PC-3 (cell line): ENCODE measurements at regions of chr2 and their contacts with region 1.

Region 1: GRCh38 chr2:81007104-81007503 is 702.6 kb upstream of the LRRTM1 start:
- DNase-seq: peak; percentile 60
- ATAC-seq: peak; percentile 37; the same call in 1 of the 2 replicates
- H3K4me3 ChIP-seq: no peak overlapping the region
- H3K27ac ChIP-seq: no peak overlapping the region
- H3K4me1 ChIP-seq: 0 out of 2 replicates have a peak, but pooled peaks cover 3% of the 10 kb centered on the region
- H3K27me3 ChIP-seq: no peaks in the 10 kb centered on the region
- CTCF ChIP-seq: peak; percentile 57

Region 2: GRCh38 chr2:80968450-80968849 is 38.7 kb before region 1 on chr2:
- CTCF ChIA-PET with region 1: no interaction called
- POLR2A ChIA-PET with region 1: no interaction called
- intact Hi-C with region 1: no loop called
- DNase-seq: peak; percentile 3
- ATAC-seq: no peak
- H3K4me3 ChIP-seq: no peak overlapping the region
- H3K27ac ChIP-seq: no peak overlapping the region
- H3K4me1 ChIP-seq: no peaks in the 10 kb centered on the region
- H3K27me3 ChIP-seq: no peaks in the 10 kb centered on the region
- CTCF ChIP-seq: peak; percentile 36; the same call in 1 of the 2 replicates

Region 3: GRCh38 chr2:81050580-81051095 is 43.5 kb after region 1 on chr2:
- CTCF ChIA-PET with region 1: no interaction called
- POLR2A ChIA-PET with region 1: no interaction called
- intact Hi-C with region 1: no loop called
- DNase-seq: no peak
- ATAC-seq: no peak
- H3K4me3 ChIP-seq: no peak overlapping the region
- H3K27ac ChIP-seq: no peak overlapping the region
- H3K4me1 ChIP-seq: no peaks in the 10 kb centered on the region
- H3K27me3 ChIP-seq: no peaks in the 10 kb centered on the region
- CTCF ChIP-seq: no peak

Region 4: DNA sequence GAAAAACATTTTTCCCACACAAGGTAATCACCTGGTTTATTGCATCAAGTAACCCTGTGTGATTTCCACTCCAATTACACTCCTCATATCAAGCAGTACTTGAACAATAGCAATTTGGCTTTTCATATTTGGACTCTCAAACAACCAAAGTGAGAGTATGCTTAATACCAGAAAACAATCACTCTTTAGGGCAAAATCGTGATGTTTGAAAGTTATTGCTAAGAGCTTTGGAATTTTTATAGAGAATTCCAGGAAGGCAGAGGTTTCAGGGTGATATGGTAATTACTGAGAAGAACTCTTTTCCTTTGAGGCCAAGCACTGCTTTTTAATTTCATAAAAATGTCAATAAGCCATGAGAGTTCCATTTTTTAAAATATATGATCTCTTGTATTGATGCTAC is 77.0 kb after region 1 on chr2:
- CTCF ChIA-PET with region 1: no interaction called
- POLR2A ChIA-PET with region 1: no interaction called
- intact Hi-C with region 1: loop called (anchors 5 kb)
- DNase-seq: peak; percentile 69
- ATAC-seq: peak; percentile 78
- H3K4me3 ChIP-seq: no peak overlapping the region
- H3K27ac ChIP-seq: peak overlapping the region; percentile 53
- H3K4me1 ChIP-seq: peaks cover 20% of the 10 kb centered on the region
- H3K27me3 ChIP-seq: no peaks in the 10 kb centered on the region
- CTCF ChIP-seq: no peak

Region 5: DNA sequence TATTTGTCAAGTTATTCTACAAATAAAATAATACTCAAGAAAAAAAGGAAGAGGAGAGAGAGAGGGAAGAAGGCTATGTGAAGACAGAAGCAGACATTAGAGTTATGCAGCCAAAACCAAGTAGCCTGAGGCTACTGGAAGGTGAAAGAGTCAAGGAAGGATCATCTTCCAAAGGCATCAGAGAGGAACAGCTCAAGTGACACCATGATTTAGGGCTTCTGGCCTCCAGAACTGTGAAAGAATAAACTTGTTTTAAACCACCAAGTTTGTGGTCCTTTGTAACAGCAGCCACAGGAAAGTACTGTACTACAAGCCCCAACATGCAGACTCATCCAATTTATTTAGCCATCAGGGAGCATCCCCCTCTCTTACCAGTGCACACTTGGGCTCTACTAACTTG is 85.9 kb after region 1 on chr2:
- CTCF ChIA-PET with region 1: no interaction called
- POLR2A ChIA-PET with region 1: no interaction called
- intact Hi-C with region 1: loop called (anchors 5 kb)
- DNase-seq: peak; percentile 39
- ATAC-seq: no peak
- H3K4me3 ChIP-seq: no peak overlapping the region
- H3K27ac ChIP-seq: no peak overlapping the region
- H3K4me1 ChIP-seq: peaks cover 12% of the 10 kb centered on the region; the same call in 1 of the 2 replicates
- H3K27me3 ChIP-seq: no peaks in the 10 kb centered on the region
- CTCF ChIP-seq: no peak

Region 6: GRCh38 chr2:81658227-81658626 is 651.1 kb after region 1 on chr2:
- CTCF ChIA-PET with region 1: no interaction called
- POLR2A ChIA-PET with region 1: no interaction called
- intact Hi-C with region 1: loop called (anchors 5 kb)
- DNase-seq: peak; percentile 98
- ATAC-seq: peak; percentile 92
- H3K4me3 ChIP-seq: no peak overlapping the region
- H3K27ac ChIP-seq: peak overlapping the region; percentile 92
- H3K4me1 ChIP-seq: peaks cover 19% of the 10 kb centered on the region
- H3K27me3 ChIP-seq: no peaks in the 10 kb centered on the region
- CTCF ChIP-seq: no peak

Region 7: GRCh38 chr2:81894451-81894990 is 887.4 kb after region 1 on chr2:
- CTCF ChIA-PET with region 1: no interaction called
- POLR2A ChIA-PET with region 1: no interaction called
- intact Hi-C with region 1: loop called (anchors 1 kb)
- DNase-seq: peak; percentile 66
- ATAC-seq: peak; percentile 79
- H3K4me3 ChIP-seq: no peak overlapping the region
- H3K27ac ChIP-seq: no peak overlapping the region
- H3K4me1 ChIP-seq: peaks cover 16% of the 10 kb centered on the region; the same call in 1 of the 2 replicates
- H3K27me3 ChIP-seq: no peaks in the 10 kb centered on the region
- CTCF ChIP-seq: peak; percentile 61

Region 8: DNA sequence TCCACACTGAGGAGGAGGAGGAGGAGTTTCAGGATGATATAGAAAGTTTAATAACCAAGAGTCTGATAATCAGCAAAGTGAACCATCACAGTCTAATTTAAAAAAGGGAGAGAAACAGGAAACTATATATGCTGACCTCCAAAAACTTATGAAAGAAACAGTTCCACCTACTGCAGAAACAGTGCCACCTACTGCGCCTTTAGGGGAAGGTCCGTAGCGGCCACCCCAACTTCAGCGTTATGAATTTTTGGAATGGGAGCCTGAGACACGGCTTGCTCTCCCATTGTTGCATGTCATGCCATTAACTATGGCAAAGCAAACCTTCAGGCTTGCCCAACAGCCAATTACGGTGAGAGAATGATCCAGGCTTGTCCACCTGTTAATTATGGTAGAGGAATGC is 1016.6 kb after region 1 on chr2:
- CTCF ChIA-PET with region 1: no interaction called
- POLR2A ChIA-PET with region 1: no interaction called
- intact Hi-C with region 1: loop called (anchors 2 kb)
- DNase-seq: peak; percentile 42
- ATAC-seq: no peak
- H3K4me3 ChIP-seq: no peak overlapping the region
- H3K27ac ChIP-seq: no peak overlapping the region
- H3K4me1 ChIP-seq: no peaks in the 10 kb centered on the region
- H3K27me3 ChIP-seq: no peaks in the 10 kb centered on the region
- CTCF ChIP-seq: peak; percentile 61